Mammary epithelial cell (primary cell): ENCODE measurements at regions of chr5 and their contacts with region 1.

Region 1: GRCh38 chr5:76867827-76868693 is 18.2 kb downstream of the S100Z start:
- DNase-seq: peak; percentile 50
- H3K4me3 ChIP-seq: no peak overlapping the region
- H3K27ac ChIP-seq: no peak overlapping the region
- H3K4me1 ChIP-seq: no peaks in the 10 kb centered on the region
- H3K27me3 ChIP-seq: no peaks in the 10 kb centered on the region
- CTCF ChIP-seq: peak; percentile 78 to 86

Region 2: GRCh38 chr5:76855961-76856360 is 12.1 kb before region 1 on chr5:
- CTCF ChIA-PET with region 1: no interaction called
- dilution Hi-C with region 1: no loop called
- in situ Hi-C with region 1: no loop called
- intact Hi-C with region 1: no loop called
- DNase-seq: no peak
- H3K4me3 ChIP-seq: no peak overlapping the region
- H3K27ac ChIP-seq: no peak overlapping the region
- H3K4me1 ChIP-seq: no peaks in the 10 kb centered on the region
- H3K27me3 ChIP-seq: no peaks in the 10 kb centered on the region
- CTCF ChIP-seq: no peak

Region 3: GRCh38 chr5:77015938-77016569 is 148.0 kb after region 1 on chr5:
- CTCF ChIA-PET with region 1: interaction called, 4 read pairs
- dilution Hi-C with region 1: no loop called
- in situ Hi-C with region 1: loop called (anchors 5 kb)
- intact Hi-C with region 1: loop called (anchors 1 kb)
- DNase-seq: peak; percentile 37
- H3K4me3 ChIP-seq: no peak overlapping the region
- H3K27ac ChIP-seq: no peak overlapping the region
- H3K4me1 ChIP-seq: no peaks in the 10 kb centered on the region
- H3K27me3 ChIP-seq: no peaks in the 10 kb centered on the region
- CTCF ChIP-seq: peak in 1 of 2 donors; percentile 44

Region 4: DNA sequence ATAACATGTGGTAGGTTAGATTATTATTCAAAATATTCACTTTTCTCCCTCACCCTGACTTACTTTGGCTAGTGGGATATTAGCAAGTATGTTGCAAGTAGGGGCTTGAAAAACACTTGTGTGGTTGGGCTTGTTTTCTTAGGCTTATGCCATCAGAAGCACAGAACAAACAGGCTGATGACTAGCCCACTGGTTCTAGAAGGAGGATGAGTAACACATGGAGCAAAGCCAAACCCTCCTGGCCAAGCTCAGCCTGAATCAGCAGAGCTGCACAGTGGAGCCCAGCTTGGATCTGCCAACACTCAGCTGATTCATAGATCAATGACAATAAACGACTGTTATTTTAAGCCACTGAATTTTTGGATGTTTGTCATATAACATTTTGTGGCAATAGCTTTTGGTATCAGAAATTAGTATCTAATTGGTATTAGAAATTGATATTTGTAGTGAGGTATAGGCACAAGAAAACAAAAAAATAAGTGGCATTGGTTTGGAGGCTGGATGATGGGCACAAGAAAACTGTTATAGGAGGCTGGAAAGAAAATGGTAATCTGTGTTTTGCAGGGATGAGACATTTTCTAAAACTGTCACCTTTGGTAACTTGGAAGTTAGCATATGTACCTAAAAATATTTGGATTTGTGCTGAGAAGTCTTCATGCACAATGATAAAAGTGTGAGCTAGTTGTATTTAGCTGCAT is 265.1 kb after region 1 on chr5:
- CTCF ChIA-PET with region 1: interaction called, 11 read pairs
- dilution Hi-C with region 1: no loop called
- in situ Hi-C with region 1: no loop called
- intact Hi-C with region 1: no loop called
- DNase-seq: peak; percentile 98
- H3K4me3 ChIP-seq: no peak overlapping the region
- H3K27ac ChIP-seq: no peak overlapping the region
- H3K4me1 ChIP-seq: peaks cover 16% of the 10 kb centered on the region
- H3K27me3 ChIP-seq: peaks cover 29% of the 10 kb centered on the region
- CTCF ChIP-seq: no peak

Region 5: GRCh38 chr5:77239126-77239741 is 371.2 kb after region 1 on chr5:
- CTCF ChIA-PET with region 1: no interaction called
- dilution Hi-C with region 1: no loop called
- in situ Hi-C with region 1: no loop called
- intact Hi-C with region 1: loop called (anchors 2 kb)
- DNase-seq: peak; percentile 9
- H3K4me3 ChIP-seq: no peak overlapping the region
- H3K27ac ChIP-seq: no peak overlapping the region
- H3K4me1 ChIP-seq: no peaks in the 10 kb centered on the region
- H3K27me3 ChIP-seq: peaks cover 5% of the 10 kb centered on the region
- CTCF ChIP-seq: peak; percentile 22 to 48

Region 6: DNA sequence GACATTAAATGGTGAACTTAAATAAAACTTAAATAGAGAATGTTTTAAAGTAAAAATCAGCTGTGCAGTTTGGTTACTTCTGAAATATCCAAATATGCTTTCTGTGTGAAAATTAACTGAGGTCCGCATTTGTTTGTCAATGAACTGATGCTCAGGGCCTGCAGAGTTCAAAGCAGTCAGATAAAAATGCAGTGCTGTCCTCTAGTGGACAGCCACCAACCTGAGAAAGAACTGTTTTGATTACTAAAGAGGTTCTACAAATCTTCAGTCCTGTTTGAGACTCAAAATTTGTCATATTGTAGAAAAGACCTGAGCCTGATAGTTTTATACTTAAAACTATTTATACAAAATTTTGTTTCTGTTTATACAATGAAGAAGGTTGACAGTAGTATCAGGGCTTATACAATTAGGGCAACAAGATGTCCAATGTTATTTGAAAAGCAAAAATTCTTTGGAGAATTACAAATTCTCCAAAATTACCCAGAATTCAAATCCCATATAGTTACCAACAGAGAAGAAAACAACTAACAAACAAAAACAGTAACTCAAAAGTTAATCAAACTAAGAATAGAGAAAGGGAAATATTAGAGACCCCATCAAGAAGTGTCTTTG is 1140.4 kb after region 1 on chr5:
- CTCF ChIA-PET with region 1: no interaction called
- dilution Hi-C with region 1: no loop called
- in situ Hi-C with region 1: no loop called
- intact Hi-C with region 1: loop called (anchors 10 kb)
- DNase-seq: peak; percentile 19
- H3K4me3 ChIP-seq: no peak overlapping the region
- H3K27ac ChIP-seq: no peak overlapping the region
- H3K4me1 ChIP-seq: no peaks in the 10 kb centered on the region
- H3K27me3 ChIP-seq: no peaks in the 10 kb centered on the region
- CTCF ChIP-seq: peak; percentile 88 to 93